Mammary epithelial cell (primary cell): ENCODE measurements at regions of chr11 and their contacts with region 1.

Region 1: DNA sequence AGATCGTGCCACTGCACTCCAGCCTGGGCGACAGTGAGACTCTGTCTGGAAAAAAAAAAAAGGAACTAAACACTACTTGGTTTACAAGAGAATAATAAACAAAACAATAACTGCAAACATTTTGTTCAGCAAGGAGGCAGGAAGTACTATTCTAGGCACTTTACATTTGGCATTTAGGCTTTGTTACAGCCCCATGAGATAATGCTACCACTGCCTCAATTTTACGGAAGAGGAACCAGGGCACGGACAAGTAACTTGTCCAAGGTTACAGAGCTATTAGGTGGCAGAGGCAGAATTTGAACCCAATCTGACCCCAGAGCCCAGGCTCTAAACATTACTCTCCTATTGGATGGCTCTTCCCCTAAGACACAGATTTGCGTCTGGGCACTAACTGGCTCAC is 108.7 kb upstream of the AKIP1 start:
- DNase-seq: no peak
- H3K4me3 ChIP-seq: no peak overlapping the region
- H3K27ac ChIP-seq: no peak overlapping the region
- H3K4me1 ChIP-seq: peaks cover 8% of the 10 kb centered on the region
- H3K27me3 ChIP-seq: no peaks in the 10 kb centered on the region
- CTCF ChIP-seq: no peak

Region 2: GRCh38 chr11:8333811-8334401 is 468.3 kb before region 1 on chr11:
- CTCF ChIA-PET with region 1: interaction called, 24 read pairs
- dilution Hi-C with region 1: no loop called
- in situ Hi-C with region 1: no loop called
- intact Hi-C with region 1: no loop called
- DNase-seq: peak; percentile 66
- H3K4me3 ChIP-seq: no peak overlapping the region
- H3K27ac ChIP-seq: no peak overlapping the region
- H3K4me1 ChIP-seq: peaks cover 29% of the 10 kb centered on the region
- H3K27me3 ChIP-seq: no peaks in the 10 kb centered on the region
- CTCF ChIP-seq: no peak

Region 3: GRCh38 chr11:8777907-8778767 is 24.1 kb before region 1 on chr11:
- CTCF ChIA-PET with region 1: no interaction called
- dilution Hi-C with region 1: no loop called
- in situ Hi-C with region 1: no loop called
- intact Hi-C with region 1: no loop called
- DNase-seq: no peak
- H3K4me3 ChIP-seq: no peak overlapping the region
- H3K27ac ChIP-seq: peak overlapping the region; percentile 36
- H3K4me1 ChIP-seq: peaks cover 50% of the 10 kb centered on the region
- H3K27me3 ChIP-seq: no peaks in the 10 kb centered on the region
- CTCF ChIP-seq: no peak